Activated T-helper 2 cell treated with anti-CD3 and anti-CD28 coated beads, Interferon-gamma antibody, Interleukin-2, Interleukin-4, amounts not matched to agents 10 μg/mL and 5 μg/mL and 100 μg/mL, durations not matched to agents 14 hours and 24 hours and 36 hours (primary cell): ENCODE measurements at regions of chr6 and their contacts with region 1.

Region 1: DNA sequence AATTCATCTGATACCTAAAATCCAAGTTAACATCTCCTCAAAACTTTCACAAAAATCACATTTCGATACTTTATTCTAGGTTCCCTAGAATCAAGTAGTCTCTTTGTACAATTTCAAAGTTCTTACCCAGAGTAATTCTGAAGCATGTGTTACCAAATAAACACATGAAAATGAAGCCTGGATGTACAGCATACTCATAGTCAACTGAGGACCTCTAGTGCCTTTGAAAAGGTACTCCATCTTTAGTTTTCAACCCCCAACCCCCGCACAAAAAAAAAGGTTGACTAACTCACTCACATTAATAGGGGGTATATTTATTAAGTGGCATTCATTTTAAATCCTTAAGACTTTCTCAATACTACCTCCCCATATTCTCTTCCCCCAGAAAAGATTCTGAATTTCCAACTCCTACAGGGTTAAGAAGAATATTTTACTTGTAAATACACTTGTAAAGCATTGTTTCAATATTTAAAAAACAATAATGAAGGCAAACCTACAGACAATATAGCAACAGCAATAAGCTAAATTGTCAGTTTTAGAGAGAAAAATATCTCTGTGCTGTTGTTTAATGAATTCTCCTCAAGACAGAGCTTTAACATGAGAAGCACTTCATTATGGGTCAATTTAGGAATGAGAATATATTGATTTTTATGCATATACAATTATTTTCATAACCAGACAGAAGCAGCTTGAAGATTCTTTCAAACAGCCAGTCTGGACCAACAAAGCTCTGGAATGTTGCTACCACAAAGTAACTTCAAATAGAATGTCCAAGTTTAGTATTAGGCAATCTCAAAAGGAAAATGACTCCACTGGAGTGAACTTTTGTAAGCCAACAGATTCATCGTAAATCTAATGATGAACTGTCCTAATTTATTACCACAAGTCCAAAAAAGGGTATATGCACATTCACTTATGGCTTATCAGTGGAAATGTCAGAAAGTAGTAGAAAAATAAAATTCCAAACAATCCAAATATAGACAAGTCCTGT is 3.3 kb downstream of the PLN start:
- DNase-seq: no peak
- H3K4me3 Mint-ChIP-seq: no peak overlapping the region
- H3K27ac Mint-ChIP-seq: no peak overlapping the region
- H3K4me1 Mint-ChIP-seq: peaks cover 19% of the 10 kb centered on the region
- H3K27me3 Mint-ChIP-seq: no peaks in the 10 kb centered on the region

Region 2: GRCh38 chr6:117976030-117976651 is 575.2 kb before region 1 on chr6:
- intact Hi-C with region 1: loop called (anchors 2 kb)
- DNase-seq: no peak
- H3K4me3 Mint-ChIP-seq: no peak overlapping the region
- H3K27ac Mint-ChIP-seq: no peak overlapping the region
- H3K4me1 Mint-ChIP-seq: no peaks in the 10 kb centered on the region
- H3K27me3 Mint-ChIP-seq: peaks cover 11% of the 10 kb centered on the region

Region 3: GRCh38 chr6:118283766-118284165 is 267.6 kb before region 1 on chr6:
- intact Hi-C with region 1: loop called (anchors 1 kb)
- DNase-seq: no peak
- H3K4me3 Mint-ChIP-seq: no peak overlapping the region
- H3K27ac Mint-ChIP-seq: no peak overlapping the region
- H3K4me1 Mint-ChIP-seq: peaks cover 6% of the 10 kb centered on the region
- H3K27me3 Mint-ChIP-seq: peaks cover 26% of the 10 kb centered on the region

Region 4: DNA sequence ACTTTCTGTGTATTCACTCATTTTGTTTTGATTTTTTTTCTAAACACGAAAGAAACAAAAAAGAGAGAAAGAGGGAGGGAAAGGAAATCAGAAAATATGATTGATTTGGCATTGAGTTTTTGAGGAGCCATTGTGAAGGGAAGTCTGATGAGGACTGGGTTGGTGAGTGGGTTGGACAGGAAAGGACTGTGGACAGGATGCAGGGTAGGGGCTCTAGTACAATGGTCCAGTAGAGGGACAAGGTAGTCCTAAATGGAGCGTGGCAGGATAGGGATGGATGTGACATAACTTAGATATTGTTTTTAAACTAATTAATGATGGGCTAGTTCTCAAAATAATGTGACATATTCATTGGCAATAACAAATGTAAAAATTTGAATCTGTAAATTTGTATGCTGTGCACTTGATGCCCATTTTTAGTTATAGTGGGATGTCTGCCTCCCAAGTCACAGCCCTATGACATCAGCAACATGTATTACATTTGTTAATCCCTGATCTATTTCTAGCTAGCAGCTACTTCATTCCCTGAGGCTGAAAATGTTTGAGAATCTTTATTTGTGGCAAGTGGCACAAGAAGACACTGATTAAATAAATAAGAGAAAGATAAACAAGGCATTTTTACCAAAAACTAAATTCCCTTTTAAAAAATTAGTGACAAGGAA is 278.6 kb after region 1 on chr6:
- intact Hi-C with region 1: no loop called
- DNase-seq: no peak
- H3K4me3 Mint-ChIP-seq: no peak overlapping the region
- H3K27ac Mint-ChIP-seq: no peak overlapping the region
- H3K4me1 Mint-ChIP-seq: no peaks in the 10 kb centered on the region
- H3K27me3 Mint-ChIP-seq: no peaks in the 10 kb centered on the region